ENCODE measurements at regions of chr10 and their contacts with region 1.

Region 1: GRCh38 chr10:119253433-119254174 is 46.2 kb downstream of the GRK5 start:
- DNase-seq: peak; percentile 83 to 89
- H3K4me3 ChIP-seq: no peak overlapping the region
- H3K27ac ChIP-seq: peak overlapping the region; percentile 92 to 96
- H3K4me1 ChIP-seq: peaks cover 31 to 37% of the 10 kb centered on the region in 2 donors
- H3K27me3 ChIP-seq: no peaks in the 10 kb centered on the region
- CTCF ChIP-seq: peak in 1 of 4 experiments; percentile 16
- POLR2A ChIP-seq: no peak

Region 2: GRCh38 chr10:119149723-119150122 is 103.9 kb before region 1 on chr10:
- intact Hi-C with region 1: no loop called
- DNase-seq: no peak
- H3K4me3 ChIP-seq: no peak overlapping the region
- H3K27ac ChIP-seq: no peak overlapping the region
- H3K4me1 ChIP-seq: no peaks in the 10 kb centered on the region
- H3K27me3 ChIP-seq: no peaks in the 10 kb centered on the region
- CTCF ChIP-seq: no peak
- POLR2A ChIP-seq: no peak

Region 3: GRCh38 chr10:119207367-119207668 is 46.3 kb before region 1 on chr10 and contains the start of gene GRK5:
- intact Hi-C with region 1: loop called (anchors 5 kb)
- DNase-seq: peak; percentile 93 to 95
- H3K4me3 ChIP-seq: peak within 1 kb of the TSS; percentile 70 to 90
- H3K27ac ChIP-seq: peak within 1 kb of the TSS; percentile 99 to 100
- H3K4me1 ChIP-seq: peaks cover 0 to 6% of the 10 kb centered on the region in 2 donors
- H3K27me3 ChIP-seq: no peaks in the 10 kb centered on the region
- CTCF ChIP-seq: no peak
- POLR2A ChIP-seq: peak; percentile 77 to 82
- total RNA-seq, gene GRK5: 11.6 to 34.6 (median 14.1) TPM

Region 4: DNA sequence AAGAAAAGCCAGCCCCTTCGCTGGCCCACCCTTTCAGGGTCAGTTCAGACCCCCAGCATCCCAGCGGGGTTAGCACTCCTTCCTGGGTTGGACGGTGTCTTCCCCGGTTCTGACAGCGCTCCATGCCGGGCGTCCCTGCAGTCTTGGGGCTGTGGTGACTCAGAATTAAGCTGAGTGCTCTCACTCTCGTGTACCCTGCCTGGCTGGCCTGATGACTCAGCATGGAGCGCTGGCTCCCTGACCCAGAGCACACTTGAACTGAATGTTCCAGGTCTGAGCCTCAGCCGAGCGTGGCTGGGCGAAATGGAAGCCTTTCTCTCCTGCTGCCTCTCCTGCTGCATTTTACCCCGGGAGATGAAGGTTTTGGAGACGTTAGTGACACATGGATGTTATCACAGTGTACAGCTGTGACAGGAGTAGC is 404.7 kb after region 1 on chr10:
- intact Hi-C with region 1: no loop called
- DNase-seq: peak; percentile 82 to 86
- H3K4me3 ChIP-seq: peak overlapping the region in 1 of 2 donors; percentile 5
- H3K27ac ChIP-seq: peak overlapping the region; percentile 77 to 99
- H3K4me1 ChIP-seq: peaks cover 5 to 26% of the 10 kb centered on the region in 2 donors
- H3K27me3 ChIP-seq: no peaks in the 10 kb centered on the region
- CTCF ChIP-seq: no peak
- POLR2A ChIP-seq: peak in 1 of 2 donors; percentile 15

Measured in uterus (tissue), 4 donors.